ENCODE measurements at regions of chr7 and their contacts with region 1.

Region 1: DNA sequence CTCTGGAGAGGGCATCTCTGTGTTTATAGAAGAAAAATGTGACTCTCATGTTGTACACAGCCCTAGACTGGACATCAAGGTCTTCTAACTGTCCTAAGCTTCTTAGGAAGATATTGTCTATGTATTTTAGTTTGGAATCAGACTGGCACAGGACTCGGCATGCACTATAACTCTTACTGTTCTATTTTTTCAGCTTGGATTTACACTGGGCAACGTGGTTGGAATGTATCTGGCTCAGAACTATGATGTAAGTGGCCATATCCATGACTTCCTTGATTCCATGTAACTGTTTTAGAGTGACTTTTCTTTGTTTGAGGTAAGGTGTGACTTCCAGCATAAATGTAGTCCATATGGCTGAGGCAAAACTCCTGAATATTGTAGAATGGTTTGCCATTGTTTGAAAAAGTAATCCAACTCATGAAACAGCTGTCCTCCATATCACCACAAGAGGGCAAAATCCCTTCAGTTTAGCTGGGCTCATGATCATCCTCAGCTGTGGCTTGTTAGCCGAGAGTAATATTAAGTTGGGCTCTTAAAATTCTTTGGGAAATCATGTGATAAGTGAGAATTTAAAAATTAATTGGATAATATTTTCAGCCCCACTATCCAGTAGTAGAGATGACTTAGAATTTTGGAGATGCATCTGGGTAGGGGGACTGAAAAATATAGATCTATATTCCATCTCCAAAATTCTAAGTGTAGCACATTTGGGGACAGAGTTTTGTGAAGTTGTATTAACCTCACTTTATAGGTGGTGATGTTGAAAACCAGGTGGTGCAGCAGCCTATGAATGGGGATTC is 10.4 kb downstream of the STMP1 start:
- DNase-seq: peak; percentile 74
- H3K4me3 ChIP-seq: no peak overlapping the region
- H3K27ac ChIP-seq: no peak overlapping the region
- H3K4me1 ChIP-seq: peaks cover 5% of the 10 kb centered on the region
- H3K27me3 ChIP-seq: no peaks in the 10 kb centered on the region
- CTCF ChIP-seq: peak; percentile 88

Region 2: GRCh38 chr7:135291809-135292253 is 380.9 kb before region 1 on chr7:
- CTCF ChIA-PET with region 1: no interaction called
- POLR2A ChIA-PET with region 1: no interaction called
- intact Hi-C with region 1: no loop called
- DNase-seq: no peak
- H3K4me3 ChIP-seq: no peak overlapping the region
- H3K27ac ChIP-seq: no peak overlapping the region
- H3K4me1 ChIP-seq: no peaks in the 10 kb centered on the region
- H3K27me3 ChIP-seq: peaks cover 14% of the 10 kb centered on the region
- CTCF ChIP-seq: no peak

Region 3: GRCh38 chr7:135795846-135796570 is 123.2 kb after region 1 on chr7:
- CTCF ChIA-PET with region 1: no interaction called
- POLR2A ChIA-PET with region 1: no interaction called
- intact Hi-C with region 1: loop called (anchors 5 kb)
- DNase-seq: no peak
- H3K4me3 ChIP-seq: no peak overlapping the region
- H3K27ac ChIP-seq: no peak overlapping the region
- H3K4me1 ChIP-seq: peaks cover 6% of the 10 kb centered on the region
- H3K27me3 ChIP-seq: no peaks in the 10 kb centered on the region
- CTCF ChIP-seq: no peak

Region 4: DNA sequence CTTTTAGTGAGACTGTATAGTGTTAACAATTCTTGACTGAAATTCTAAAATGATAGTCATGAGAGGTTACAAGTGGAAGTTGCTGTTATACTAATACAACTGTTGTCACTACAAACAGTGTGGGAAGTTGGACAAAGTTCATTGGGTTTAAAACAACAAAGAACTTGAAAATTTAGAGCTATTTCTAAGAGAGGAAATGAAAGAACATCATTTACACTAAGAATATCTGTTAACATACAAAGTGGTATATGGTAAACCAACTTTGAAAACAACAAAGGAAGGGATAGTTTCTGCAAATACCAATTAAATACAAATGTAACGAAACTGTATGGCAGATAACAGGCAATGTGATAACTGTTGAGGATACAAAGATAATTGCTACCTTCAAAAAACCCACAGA is 292.8 kb after region 1 on chr7:
- CTCF ChIA-PET with region 1: no interaction called
- POLR2A ChIA-PET with region 1: no interaction called
- intact Hi-C with region 1: no loop called
- DNase-seq: no peak
- H3K4me3 ChIP-seq: no peak overlapping the region
- H3K27ac ChIP-seq: no peak overlapping the region
- H3K4me1 ChIP-seq: peaks cover 23% of the 10 kb centered on the region
- H3K27me3 ChIP-seq: no peaks in the 10 kb centered on the region
- CTCF ChIP-seq: no peak

Region 5: GRCh38 chr7:136009488-136010079 is 336.8 kb after region 1 on chr7:
- CTCF ChIA-PET with region 1: no interaction called
- POLR2A ChIA-PET with region 1: no interaction called
- intact Hi-C with region 1: loop called (anchors 5 kb)
- DNase-seq: peak; percentile 76
- H3K4me3 ChIP-seq: no peak overlapping the region
- H3K27ac ChIP-seq: no peak overlapping the region
- H3K4me1 ChIP-seq: no peaks in the 10 kb centered on the region
- H3K27me3 ChIP-seq: no peaks in the 10 kb centered on the region
- CTCF ChIP-seq: peak; percentile 79